Endothelial cell of umbilical vein (primary cell): ENCODE measurements at regions of chr19 and their contacts with region 1.

Region 1: DNA sequence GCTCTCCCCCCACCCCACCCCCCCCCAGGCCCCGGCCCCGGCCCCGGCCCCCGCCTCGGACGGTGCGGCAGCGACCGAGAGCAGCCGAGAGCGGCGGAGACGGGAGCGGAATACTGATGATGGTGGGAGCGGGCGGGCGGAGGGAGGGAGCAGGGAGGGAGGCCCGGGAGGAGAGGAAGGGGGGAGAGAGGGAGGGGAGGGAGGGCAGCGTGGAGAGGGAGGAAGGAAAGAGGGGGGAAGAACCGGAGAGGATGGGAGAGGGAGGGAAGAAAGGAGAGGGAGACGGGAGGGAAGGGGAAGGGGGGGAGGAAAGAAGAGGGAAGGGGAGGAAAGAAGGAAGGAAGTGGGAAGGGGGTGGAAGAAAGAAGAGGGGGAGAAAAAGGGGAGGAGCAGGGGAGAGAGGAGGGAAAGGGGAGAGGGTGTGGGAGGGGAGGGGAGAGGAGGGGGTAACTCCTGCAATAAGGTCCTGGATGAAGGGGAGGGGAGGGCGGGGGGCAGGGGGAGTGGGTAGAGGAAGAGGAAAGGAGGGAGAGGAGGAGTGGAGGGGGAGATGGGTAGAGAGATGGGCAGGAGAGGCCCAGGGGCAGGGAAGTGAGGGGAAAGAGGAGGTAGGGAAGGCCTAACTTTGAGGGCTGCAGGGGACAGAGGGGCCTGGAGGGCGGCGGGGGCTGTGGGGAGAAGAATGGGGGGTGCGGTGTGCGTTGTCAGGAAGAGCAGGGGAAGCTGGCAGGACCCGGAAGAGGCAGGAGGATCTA is at the start of gene LRRC4B:
- DNase-seq: no peak
- H3K4me3 ChIP-seq: no peak within 1 kb of the TSS
- H3K27ac ChIP-seq: no peak within 1 kb of the TSS
- H3K4me1 ChIP-seq: no peaks in the 10 kb centered on the region
- H3K27me3 ChIP-seq: peaks cover 18 to 31% of the 10 kb centered on the region in 2 experiments
- CTCF ChIP-seq: no peak
- POLR2A ChIP-seq: no peak
- total RNA-seq, gene LRRC4B: not detected in 2 replicates

Region 2: DNA sequence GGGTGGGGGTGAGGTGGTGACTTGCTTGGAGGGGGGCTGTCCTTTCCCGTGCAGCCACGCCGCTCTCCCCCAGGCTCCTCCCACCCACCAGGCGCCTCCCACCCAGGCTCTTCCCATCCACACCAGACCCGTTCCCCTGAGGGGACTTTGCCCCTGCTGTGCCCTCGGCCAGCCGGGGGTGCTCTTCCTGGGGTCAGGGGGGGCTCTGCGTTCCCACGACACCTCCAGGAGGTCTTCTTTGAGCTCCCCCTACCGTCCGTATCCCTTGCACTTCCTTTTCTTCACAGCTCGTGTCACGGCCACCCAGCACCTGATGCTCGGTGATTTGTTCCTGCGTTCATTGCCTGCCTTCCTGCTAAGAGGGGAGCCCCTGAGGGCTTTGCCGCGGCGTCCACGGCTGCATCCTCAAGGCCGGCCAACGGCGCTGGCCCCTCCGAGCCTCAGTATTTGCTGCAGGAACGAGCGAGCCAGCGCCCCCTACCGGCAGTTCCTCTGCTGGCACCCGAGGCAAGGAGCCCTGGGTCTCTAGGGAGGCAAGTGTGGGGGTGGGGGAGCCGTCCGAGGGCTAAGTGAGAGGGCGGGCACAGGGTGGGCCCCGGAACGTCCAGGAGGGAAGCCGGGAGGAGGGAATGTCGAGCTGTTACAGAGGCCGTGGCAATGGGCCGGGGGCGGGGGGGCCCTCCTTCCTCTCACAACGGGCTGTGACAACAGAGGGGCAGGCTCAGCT is 12.1 kb before region 1 on chr19:
- CTCF ChIA-PET with region 1: interaction called, 56 read pairs
- POLR2A ChIA-PET with region 1: no interaction called
- dilution Hi-C with region 1: no loop called
- intact Hi-C with region 1: no loop called
- DNase-seq: peak; percentile 67
- H3K4me3 ChIP-seq: peak overlapping the region; percentile 35 to 69 (median 43)
- H3K27ac ChIP-seq: no peak overlapping the region
- H3K4me1 ChIP-seq: peaks cover 3% of the 10 kb centered on the region
- H3K27me3 ChIP-seq: peaks cover 3% of the 10 kb centered on the region in 2 experiments
- CTCF ChIP-seq: peak; percentile 93 to 94
- POLR2A ChIP-seq: no peak